ENCODE measurements at regions of chr1 and their contacts with region 1.

Region 1: GRCh38 chr1:192489748-192490147 is 85.8 kb upstream of the RGS1 start:
- DNase-seq: peak; percentile 95
- ATAC-seq: peak; percentile 81
- H3K4me3 ChIP-seq: no peak overlapping the region
- H3K27ac ChIP-seq: no peak overlapping the region
- H3K4me1 ChIP-seq: 0 out of 2 replicates have a peak, but pooled peaks cover 2% of the 10 kb centered on the region
- H3K27me3 ChIP-seq: no peaks in the 10 kb centered on the region
- CTCF ChIP-seq: no peak
- POLR2A ChIP-seq: no peak
- RAD21 ChIP-seq: no peak

Region 2: DNA sequence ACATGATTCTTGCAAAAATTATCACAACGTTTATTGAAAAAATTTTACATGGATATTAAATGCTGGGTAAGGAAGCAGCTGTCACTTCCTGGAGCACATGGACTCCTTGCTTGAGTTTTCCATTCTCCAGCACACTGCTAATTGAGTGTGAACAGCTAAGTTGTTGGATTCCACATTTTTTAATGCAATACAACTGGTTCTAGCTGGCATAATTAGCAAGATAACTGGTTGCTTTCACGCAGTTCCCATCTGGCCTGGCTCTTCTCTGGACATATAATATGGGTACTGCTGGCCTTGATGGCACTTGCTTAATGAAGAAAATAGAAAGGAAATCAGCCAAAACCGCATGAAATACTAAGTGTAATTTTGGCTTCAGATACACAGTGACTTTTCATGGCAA is 146.4 kb before region 1 on chr1:
- CTCF ChIA-PET with region 1: no interaction called
- POLR2A ChIA-PET with region 1: no interaction called
- dilution Hi-C with region 1: no loop called
- in situ Hi-C with region 1: no loop called
- intact Hi-C with region 1: no loop called
- DNase-seq: no peak
- ATAC-seq: no peak
- H3K4me3 ChIP-seq: no peak overlapping the region
- H3K27ac ChIP-seq: no peak overlapping the region
- H3K4me1 ChIP-seq: no peaks in the 10 kb centered on the region
- H3K27me3 ChIP-seq: no peaks in the 10 kb centered on the region
- CTCF ChIP-seq: no peak
- POLR2A ChIP-seq: no peak
- RAD21 ChIP-seq: no peak

Region 3: DNA sequence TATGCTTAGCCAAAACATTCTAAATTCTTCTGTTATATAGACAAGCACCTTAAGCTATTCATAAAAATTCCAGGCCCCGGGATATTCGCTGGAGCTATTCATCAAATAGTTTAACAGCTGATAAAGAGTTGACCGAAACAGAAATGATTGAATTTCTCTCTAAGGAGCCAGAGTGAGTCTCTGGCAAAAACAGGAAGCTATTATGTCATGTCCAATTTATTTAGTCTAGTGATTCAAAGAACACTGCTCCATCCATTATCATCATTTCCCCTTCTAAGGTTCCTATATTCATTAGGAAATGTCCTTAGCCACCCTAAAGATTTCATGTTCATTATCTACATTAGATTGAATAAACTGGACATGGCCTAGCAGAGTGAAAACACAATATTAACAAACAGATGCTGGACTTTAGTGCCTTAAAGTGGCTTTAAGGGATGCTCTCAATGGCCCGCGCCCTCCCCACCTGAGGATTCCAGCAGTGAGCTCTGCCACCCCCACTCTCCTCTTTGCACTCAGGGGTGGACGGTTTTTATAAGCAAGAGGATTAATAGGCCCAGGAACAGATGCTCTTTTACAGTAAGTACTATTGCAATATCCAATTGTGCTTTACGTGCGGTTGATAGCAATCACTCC is 36.3 kb before region 1 on chr1:
- CTCF ChIA-PET with region 1: no interaction called
- POLR2A ChIA-PET with region 1: no interaction called
- dilution Hi-C with region 1: no loop called
- in situ Hi-C with region 1: no loop called
- intact Hi-C with region 1: no loop called
- DNase-seq: peak; percentile 21
- ATAC-seq: peak; percentile 33; the same call in 1 of the 2 replicates
- H3K4me3 ChIP-seq: no peak overlapping the region
- H3K27ac ChIP-seq: no peak overlapping the region
- H3K4me1 ChIP-seq: peaks cover 4% of the 10 kb centered on the region
- H3K27me3 ChIP-seq: no peaks in the 10 kb centered on the region
- CTCF ChIP-seq: no peak
- POLR2A ChIP-seq: no peak
- RAD21 ChIP-seq: no peak

Region 4: GRCh38 chr1:192539297-192540092 is 49.7 kb after region 1 on chr1:
- CTCF ChIA-PET with region 1: no interaction called
- POLR2A ChIA-PET with region 1: no interaction called
- dilution Hi-C with region 1: no loop called
- in situ Hi-C with region 1: loop called (anchors 10 kb)
- intact Hi-C with region 1: loop called (anchors 5 kb)
- DNase-seq: peak; percentile 98
- ATAC-seq: peak; percentile 96
- H3K4me3 ChIP-seq: no peak overlapping the region
- H3K27ac ChIP-seq: peak overlapping the region; percentile 99
- H3K4me1 ChIP-seq: peaks cover 12% of the 10 kb centered on the region
- H3K27me3 ChIP-seq: no peaks in the 10 kb centered on the region
- CTCF ChIP-seq: no peak
- POLR2A ChIP-seq: no peak
- RAD21 ChIP-seq: peak; percentile 27

Region 5: GRCh38 chr1:192713921-192714320 is 224.2 kb after region 1 on chr1:
- CTCF ChIA-PET with region 1: no interaction called
- POLR2A ChIA-PET with region 1: no interaction called
- dilution Hi-C with region 1: no loop called
- in situ Hi-C with region 1: no loop called
- intact Hi-C with region 1: no loop called
- DNase-seq: no peak
- ATAC-seq: no peak
- H3K4me3 ChIP-seq: no peak overlapping the region
- H3K27ac ChIP-seq: no peak overlapping the region
- H3K4me1 ChIP-seq: 0 out of 2 replicates have a peak, but pooled peaks cover 4% of the 10 kb centered on the region
- H3K27me3 ChIP-seq: no peaks in the 10 kb centered on the region
- CTCF ChIP-seq: no peak
- POLR2A ChIP-seq: no peak
- RAD21 ChIP-seq: no peak

Measured in IMR-90 (cell line).